Activated B cell treated with CpG ODN at 0.5 μM for 24 hours (primary cell): ENCODE measurements at regions of chr3 and their contacts with region 1.

Region 1: GRCh38 chr3:37227870-37228549 is 53.6 kb upstream of the LRRFIP2 start:
- DNase-seq: no peak
- ATAC-seq: no peak
- H3K4me3 Mint-ChIP-seq: no peak overlapping the region
- H3K27ac Mint-ChIP-seq: no peak overlapping the region
- H3K4me1 Mint-ChIP-seq: no peaks in the 10 kb centered on the region
- H3K27me3 Mint-ChIP-seq: peaks cover 11% of the 10 kb centered on the region
- CTCF ChIP-seq: no peak

Region 2: GRCh38 chr3:37144806-37145205 is 83.2 kb before region 1 on chr3:
- CTCF ChIA-PET with region 1: no interaction called
- POLR2A ChIA-PET with region 1: no interaction called
- intact Hi-C with region 1: no loop called
- DNase-seq: no peak
- ATAC-seq: no peak
- H3K4me3 Mint-ChIP-seq: no peak overlapping the region
- H3K27ac Mint-ChIP-seq: no peak overlapping the region
- H3K4me1 Mint-ChIP-seq: peaks cover 35% of the 10 kb centered on the region
- H3K27me3 Mint-ChIP-seq: no peaks in the 10 kb centered on the region
- CTCF ChIP-seq: no peak

Region 3: DNA sequence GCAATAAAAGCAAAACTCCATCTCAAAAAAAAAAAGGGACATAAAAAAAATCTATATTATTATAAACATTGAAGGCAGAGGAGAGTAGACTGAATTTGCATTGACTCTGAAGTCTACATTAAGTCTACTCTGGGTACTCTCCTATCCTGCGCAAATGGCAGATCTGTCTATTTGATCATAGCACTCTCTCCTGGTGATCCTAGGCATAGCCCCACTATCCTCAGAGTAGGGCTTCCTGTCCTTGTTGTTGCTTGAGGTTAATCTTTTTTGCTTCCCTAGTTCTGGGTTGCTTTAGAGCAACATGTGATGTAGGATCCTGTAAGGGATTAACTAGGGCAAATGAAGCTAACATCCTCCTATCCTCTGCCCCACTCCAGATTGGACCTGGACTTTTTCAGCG is 28.4 kb after region 1 on chr3:
- CTCF ChIA-PET with region 1: no interaction called
- POLR2A ChIA-PET with region 1: no interaction called
- intact Hi-C with region 1: loop called (anchors 2 kb)
- DNase-seq: no peak
- ATAC-seq: no peak
- H3K4me3 Mint-ChIP-seq: no peak overlapping the region
- H3K27ac Mint-ChIP-seq: no peak overlapping the region
- H3K4me1 Mint-ChIP-seq: peaks cover 23% of the 10 kb centered on the region
- H3K27me3 Mint-ChIP-seq: no peaks in the 10 kb centered on the region
- CTCF ChIP-seq: no peak